Endothelial cell of umbilical vein (primary cell): ENCODE measurements at regions of chrX and their contacts with region 1.

Region 1: GRCh38 chrX:70030301-70030767 is 19.4 kb downstream of the AWAT2 start:
- DNase-seq: peak; percentile 49
- H3K4me3 ChIP-seq: no peak overlapping the region
- H3K27ac ChIP-seq: no peak overlapping the region
- H3K4me1 ChIP-seq: peaks cover 34% of the 10 kb centered on the region
- H3K27me3 ChIP-seq: no peaks in the 10 kb centered on the region
- CTCF ChIP-seq: peak; percentile 71
- POLR2A ChIP-seq: no peak

Region 2: GRCh38 chrX:68978258-68979054 is 1051.9 kb before region 1 on chrX:
- CTCF ChIA-PET with region 1: no interaction called
- POLR2A ChIA-PET with region 1: no interaction called
- dilution Hi-C with region 1: no loop called
- intact Hi-C with region 1: no loop called
- DNase-seq: peak; percentile 1
- H3K4me3 ChIP-seq: no peak overlapping the region
- H3K27ac ChIP-seq: no peak overlapping the region
- H3K4me1 ChIP-seq: no peaks in the 10 kb centered on the region
- H3K27me3 ChIP-seq: peaks cover 4 to 5% of the 10 kb centered on the region in 2 experiments
- CTCF ChIP-seq: no peak
- POLR2A ChIP-seq: no peak

Region 3: GRCh38 chrX:69493193-69493592 is 537.1 kb before region 1 on chrX:
- CTCF ChIA-PET with region 1: interaction called, 5 read pairs
- POLR2A ChIA-PET with region 1: no interaction called
- dilution Hi-C with region 1: no loop called
- intact Hi-C with region 1: loop called (anchors 1 kb)
- DNase-seq: peak; percentile 1
- H3K4me3 ChIP-seq: no peak overlapping the region
- H3K27ac ChIP-seq: no peak overlapping the region
- H3K4me1 ChIP-seq: no peaks in the 10 kb centered on the region
- H3K27me3 ChIP-seq: peaks cover 0 to 1% of the 10 kb centered on the region in 2 experiments
- CTCF ChIP-seq: peak; percentile 6 to 14
- POLR2A ChIP-seq: no peak

Region 4: DNA sequence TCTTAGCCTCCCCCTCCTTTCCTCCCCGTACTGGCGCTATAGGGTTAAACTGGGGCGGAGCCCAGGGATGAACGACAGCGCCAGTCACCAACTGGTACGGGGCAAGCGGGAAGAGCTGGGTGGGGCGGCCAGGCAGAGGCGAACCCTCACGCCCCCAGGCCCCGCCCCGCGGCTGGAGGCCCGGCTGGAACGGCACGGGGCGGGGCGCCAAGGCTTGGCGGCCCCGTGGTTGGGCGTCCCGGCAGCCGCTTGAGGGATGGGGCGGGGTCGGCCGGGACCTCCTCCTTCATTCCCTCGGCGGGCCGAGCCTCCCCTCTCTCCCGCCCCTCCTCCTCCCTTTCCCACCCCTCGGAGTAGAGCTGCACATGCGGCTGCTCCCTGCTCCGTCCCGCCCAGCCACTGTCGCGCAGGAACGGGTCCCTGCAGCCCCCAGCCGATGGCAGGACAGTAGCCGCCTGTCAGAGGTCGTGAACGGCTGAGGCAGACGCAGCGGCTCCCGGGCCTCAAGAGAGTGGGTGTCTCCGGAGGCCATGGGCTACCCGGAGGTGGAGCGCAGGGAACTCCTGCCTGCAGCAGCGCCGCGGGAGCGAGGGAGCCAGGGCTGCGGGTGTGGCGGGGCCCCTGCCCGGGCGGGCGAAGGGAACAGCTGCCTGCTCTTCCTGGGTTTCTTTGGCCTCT is 414.4 kb before region 1 on chrX and contains the start of gene EDA:
- CTCF ChIA-PET with region 1: interaction called, 33 read pairs
- POLR2A ChIA-PET with region 1: no interaction called
- dilution Hi-C with region 1: no loop called
- intact Hi-C with region 1: loop called (anchors 1 kb)
- DNase-seq: peak; percentile 71
- H3K4me3 ChIP-seq: peak within 1 kb of the TSS in 2 of 3 experiments; percentile 32 to 47
- H3K27ac ChIP-seq: no peak within 1 kb of the TSS
- H3K4me1 ChIP-seq: no peaks in the 10 kb centered on the region
- H3K27me3 ChIP-seq: peaks cover 9 to 15% of the 10 kb centered on the region in 2 experiments
- CTCF ChIP-seq: no peak
- POLR2A ChIP-seq: no peak
- total RNA-seq, gene EDA: 0.44 and 1.2 TPM in 2 replicates

Region 5: GRCh38 chrX:70087857-70088630 is 57.7 kb after region 1 on chrX:
- CTCF ChIA-PET with region 1: interaction called, 207 read pairs
- POLR2A ChIA-PET with region 1: no interaction called
- dilution Hi-C with region 1: no loop called
- intact Hi-C with region 1: no loop called
- DNase-seq: peak; percentile 75
- H3K4me3 ChIP-seq: no peak overlapping the region
- H3K27ac ChIP-seq: no peak overlapping the region
- H3K4me1 ChIP-seq: peaks cover 29% of the 10 kb centered on the region
- H3K27me3 ChIP-seq: no peaks in the 10 kb centered on the region
- CTCF ChIP-seq: no peak
- POLR2A ChIP-seq: no peak

Region 6: GRCh38 chrX:71809886-71810285 is 1779.6 kb after region 1 on chrX:
- CTCF ChIA-PET with region 1: no interaction called
- POLR2A ChIA-PET with region 1: no interaction called
- dilution Hi-C with region 1: no loop called
- intact Hi-C with region 1: no loop called
- DNase-seq: no peak
- H3K4me3 ChIP-seq: no peak overlapping the region
- H3K27ac ChIP-seq: no peak overlapping the region
- H3K4me1 ChIP-seq: no peaks in the 10 kb centered on the region
- H3K27me3 ChIP-seq: no peaks in the 10 kb centered on the region
- CTCF ChIP-seq: no peak
- POLR2A ChIP-seq: no peak